MCF 10A (cell line): ENCODE measurements at regions of chr7 and their contacts with region 1.

Region 1: GRCh38 chr7:80499350-80499953 is 12.4 kb downstream of the GNAT3 start:
- DNase-seq: peak; percentile 85
- H3K4me3 Mint-ChIP-seq: peak overlapping the region; percentile 52
- H3K27ac Mint-ChIP-seq: peak overlapping the region; percentile 94
- H3K4me1 Mint-ChIP-seq: peaks cover 17% of the 10 kb centered on the region
- H3K27me3 Mint-ChIP-seq: no peaks in the 10 kb centered on the region
- CTCF ChIP-seq: no peak

Region 2: GRCh38 chr7:80379034-80379982 is 120.1 kb before region 1 on chr7:
- CTCF ChIA-PET with region 1: no interaction called
- POLR2A ChIA-PET with region 1: no interaction called
- intact Hi-C with region 1: no loop called
- DNase-seq: peak; percentile 30
- H3K4me3 Mint-ChIP-seq: no peak overlapping the region
- H3K27ac Mint-ChIP-seq: no peak overlapping the region
- H3K4me1 Mint-ChIP-seq: no peaks in the 10 kb centered on the region
- H3K27me3 Mint-ChIP-seq: no peaks in the 10 kb centered on the region
- CTCF ChIP-seq: no peak

Region 3: GRCh38 chr7:80478683-80479082 is 20.8 kb before region 1 on chr7:
- CTCF ChIA-PET with region 1: interaction called, 4 read pairs
- POLR2A ChIA-PET with region 1: interaction called, 20 read pairs
- intact Hi-C with region 1: no loop called
- DNase-seq: peak; percentile 31
- H3K4me3 Mint-ChIP-seq: no peak overlapping the region
- H3K27ac Mint-ChIP-seq: no peak overlapping the region
- H3K4me1 Mint-ChIP-seq: peaks cover 20% of the 10 kb centered on the region
- H3K27me3 Mint-ChIP-seq: no peaks in the 10 kb centered on the region
- CTCF ChIP-seq: no peak

Region 4: DNA sequence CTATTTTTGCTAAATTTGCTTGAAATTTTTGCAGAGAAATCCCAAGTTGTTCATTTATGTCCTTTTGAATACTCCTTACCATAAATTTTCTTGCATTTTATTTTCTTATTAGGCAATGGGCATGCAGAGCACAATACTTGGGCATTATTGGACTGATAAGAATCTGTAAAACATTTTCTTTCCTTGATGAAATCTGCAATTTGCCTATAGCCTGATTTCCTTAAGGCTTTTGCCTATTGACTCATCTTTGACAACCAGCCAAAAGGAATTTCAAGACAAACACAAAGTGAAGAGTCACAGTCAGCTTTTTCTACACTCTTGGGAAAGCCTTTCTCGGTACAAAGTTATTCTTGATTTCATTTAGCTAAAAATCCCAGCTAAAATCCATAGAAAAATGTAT is 43.0 kb after region 1 on chr7:
- CTCF ChIA-PET with region 1: no interaction called
- POLR2A ChIA-PET with region 1: interaction called, 10 read pairs
- intact Hi-C with region 1: no loop called
- DNase-seq: peak; percentile 89
- H3K4me3 Mint-ChIP-seq: peak overlapping the region; percentile 11
- H3K27ac Mint-ChIP-seq: no peak overlapping the region
- H3K4me1 Mint-ChIP-seq: peaks cover 7% of the 10 kb centered on the region
- H3K27me3 Mint-ChIP-seq: no peaks in the 10 kb centered on the region
- CTCF ChIP-seq: no peak

Region 5: DNA sequence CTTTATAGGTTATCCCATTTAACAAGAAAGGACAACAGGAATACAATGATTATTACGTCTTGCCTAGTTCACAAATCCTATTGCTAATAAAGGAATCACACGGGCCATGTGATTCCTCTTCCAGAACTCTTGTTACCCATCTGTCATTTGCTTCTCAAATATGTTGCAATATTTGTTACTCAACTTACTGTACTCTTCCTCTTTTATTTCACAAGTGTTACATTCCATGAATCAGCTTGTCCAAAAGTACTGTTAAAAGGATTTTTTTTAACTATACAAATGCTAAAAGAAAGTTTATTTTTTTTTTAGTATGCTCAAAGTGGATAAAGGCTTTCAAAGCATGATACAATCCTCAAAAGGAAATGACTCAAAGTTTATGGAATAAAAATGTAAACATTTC is 135.1 kb after region 1 on chr7:
- CTCF ChIA-PET with region 1: no interaction called
- POLR2A ChIA-PET with region 1: interaction called, 3 read pairs
- intact Hi-C with region 1: loop called (anchors 5 kb)
- DNase-seq: peak; percentile 86
- H3K4me3 Mint-ChIP-seq: no peak overlapping the region
- H3K27ac Mint-ChIP-seq: peak overlapping the region; percentile 71
- H3K4me1 Mint-ChIP-seq: peaks cover 21% of the 10 kb centered on the region
- H3K27me3 Mint-ChIP-seq: no peaks in the 10 kb centered on the region
- CTCF ChIP-seq: no peak